Aorta (tissue), 5 donors: ENCODE measurements at regions of chr2 and their contacts with region 1.

Region 1: DNA sequence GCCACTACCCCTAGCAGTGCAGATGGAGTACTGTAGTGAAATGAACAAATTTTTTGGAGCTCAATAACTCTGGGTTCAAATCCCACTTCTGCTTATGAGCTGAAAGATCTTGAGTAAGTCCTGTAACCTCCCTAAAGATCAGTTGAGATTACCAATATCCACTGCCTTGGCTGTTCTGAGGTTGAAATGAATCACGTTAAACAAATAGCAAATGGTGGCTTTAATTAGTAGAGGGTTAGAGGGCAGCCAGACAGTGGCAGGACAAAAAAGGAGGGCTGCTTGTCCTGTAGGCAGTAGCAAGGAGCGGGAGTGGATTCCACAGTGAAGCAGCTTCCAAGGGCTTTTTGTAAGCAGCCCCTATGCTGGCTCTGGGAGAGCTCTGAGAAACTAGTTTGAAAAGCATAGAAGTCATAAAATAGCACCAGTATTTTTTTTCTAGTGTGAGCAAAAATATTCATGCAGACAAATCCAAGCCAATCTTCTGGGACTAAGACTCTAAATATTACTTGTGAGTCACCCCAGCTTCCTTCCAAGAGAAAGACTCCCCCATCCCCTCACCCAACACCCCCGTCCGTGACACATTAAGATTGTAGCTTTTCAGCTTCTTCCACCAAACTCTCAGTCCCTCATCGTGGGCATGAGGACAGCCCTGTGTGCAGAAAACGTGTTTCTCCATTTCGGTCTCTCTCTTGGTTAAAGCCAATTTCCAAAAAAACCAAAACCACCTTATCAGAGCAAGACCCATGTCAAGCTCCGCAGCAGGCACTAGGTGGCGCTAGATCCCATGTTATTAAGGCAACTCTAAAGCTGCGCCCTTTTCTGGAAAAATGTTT is 123.5 kb upstream of the LGALSL start:
- DNase-seq: peak; percentile 89 to 91
- ATAC-seq: peak; percentile 93
- H3K4me3 ChIP-seq: no peak overlapping the region
- H3K27ac ChIP-seq: peak overlapping the region; percentile 96 to 98
- H3K4me1 ChIP-seq: no peaks in the 10 kb centered on the region
- H3K27me3 ChIP-seq: no peaks in the 10 kb centered on the region

Region 2: GRCh38 chr2:64144057-64145013 is 186.2 kb before region 1 on chr2 and contains the start of gene PELI1:
- intact Hi-C with region 1: loop called in 1 of 2 experiments (anchors 2 kb)
- DNase-seq: peak; percentile 96 to 99
- ATAC-seq: peak; percentile 100
- H3K4me3 ChIP-seq: peak within 1 kb of the TSS; percentile 83 to 98
- H3K27ac ChIP-seq: peak within 1 kb of the TSS; percentile 95 to 99
- H3K4me1 ChIP-seq: no peaks in the 10 kb centered on the region
- H3K27me3 ChIP-seq: no peaks in the 10 kb centered on the region
- total RNA-seq, gene PELI1: 36.7 to 38.0 TPM

Region 3: GRCh38 chr2:64488050-64488974 is 157.8 kb after region 1 on chr2:
- intact Hi-C with region 1: loop called (anchors 2 to 5 kb)
- DNase-seq: peak; percentile 71 to 90
- ATAC-seq: peak; percentile 76
- H3K4me3 ChIP-seq: no peak overlapping the region
- H3K27ac ChIP-seq: no peak overlapping the region
- H3K4me1 ChIP-seq: peaks cover 0 to 2% of the 10 kb centered on the region in 2 donors
- H3K27me3 ChIP-seq: no peaks in the 10 kb centered on the region

Region 4: DNA sequence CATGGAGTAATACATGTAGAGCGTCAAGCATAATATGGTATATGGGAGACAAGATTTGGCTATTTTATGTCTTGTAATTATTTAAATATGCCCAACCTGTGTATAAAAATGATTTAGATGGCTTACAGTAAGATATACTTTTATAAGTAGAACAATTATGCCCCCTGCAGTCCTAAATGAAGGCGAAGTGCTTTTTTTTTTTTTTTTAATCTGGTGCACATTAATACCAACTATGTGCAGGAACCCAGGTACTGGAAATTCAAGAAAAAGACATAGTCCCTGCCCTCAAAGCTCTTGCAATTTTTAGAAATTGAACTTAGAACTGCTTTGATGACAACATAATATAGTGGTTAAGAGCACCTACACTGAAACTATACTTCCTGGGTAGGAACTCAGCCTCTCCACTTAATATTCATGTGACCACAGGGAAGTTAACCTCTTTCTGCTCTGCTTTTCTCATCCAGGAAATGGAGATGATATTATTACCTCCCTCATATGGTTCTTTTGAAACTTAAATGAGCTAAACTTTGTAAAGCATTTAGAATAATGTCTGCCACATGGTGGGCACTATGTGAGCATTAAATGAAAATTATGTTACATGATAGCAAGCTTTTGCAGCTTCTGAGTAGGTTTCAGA is 231.8 kb after region 1 on chr2:
- intact Hi-C with region 1: loop called (anchors 2 kb)
- DNase-seq: no peak
- ATAC-seq: no peak
- H3K4me3 ChIP-seq: no peak overlapping the region
- H3K27ac ChIP-seq: no peak overlapping the region
- H3K4me1 ChIP-seq: peaks cover 0 to 3% of the 10 kb centered on the region in 2 donors
- H3K27me3 ChIP-seq: no peaks in the 10 kb centered on the region

Region 5: GRCh38 chr2:64888591-64889309 is 558.3 kb after region 1 on chr2:
- intact Hi-C with region 1: loop called in 1 of 2 experiments (anchors 5 kb)
- DNase-seq: no peak
- ATAC-seq: no peak
- H3K4me3 ChIP-seq: no peak overlapping the region
- H3K27ac ChIP-seq: no peak overlapping the region
- H3K4me1 ChIP-seq: no peaks in the 10 kb centered on the region
- H3K27me3 ChIP-seq: no peaks in the 10 kb centered on the region